Activated T-helper 1 cell treated with anti-CD3 and anti-CD28 coated beads, Interleukin-12 subunit alpha, Interleukin-12 subunit beta, Interleukin-2, Interleukin-4 antibody, amounts not matched to agents 30 ng/mL and 10 ng/mL and 1 ng/mL, durations not matched to agents 14 hours and 24 hours and 36 hours (primary cell): ENCODE measurements at regions of chr3 and their contacts with region 1.

Region 1: DNA sequence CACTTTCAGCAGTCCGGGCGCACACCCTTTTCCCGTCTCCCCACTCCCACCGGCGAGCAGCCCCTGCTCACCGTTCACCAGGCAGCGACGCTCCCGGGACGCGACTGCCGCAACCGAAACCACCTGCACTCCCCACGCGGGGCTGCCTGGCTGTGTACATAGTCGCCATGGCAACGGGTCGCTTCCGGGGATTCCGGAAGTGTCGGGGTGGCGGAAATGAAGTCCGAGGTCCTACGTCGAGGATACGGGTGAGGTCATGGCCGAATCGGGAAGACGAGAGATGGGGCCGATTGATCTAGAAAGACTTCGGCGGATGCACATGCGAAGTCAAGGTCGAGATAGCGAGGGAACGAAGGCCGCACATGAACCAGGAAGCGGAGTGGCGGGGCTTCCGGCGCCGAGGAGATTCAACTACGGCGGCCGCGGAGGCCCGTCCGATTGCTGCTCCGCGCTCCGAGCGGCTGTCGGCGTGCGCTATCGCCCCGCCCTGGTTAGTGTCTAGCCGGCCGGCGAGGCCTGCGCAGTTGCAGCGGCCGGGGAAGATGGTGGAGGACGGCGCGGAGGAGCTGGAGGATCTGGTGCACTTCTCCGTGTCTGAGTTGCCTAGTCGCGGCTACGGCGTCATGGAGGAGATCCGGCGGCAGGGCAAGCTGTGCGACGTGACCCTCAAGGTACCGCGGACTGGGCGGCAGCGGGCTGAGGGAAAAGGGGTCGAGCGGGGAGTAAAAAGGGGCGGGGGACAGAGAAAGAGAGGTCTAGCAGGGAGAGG is at the starts of genes KIF9 and KLHL18:
- DNase-seq: peak; percentile 95
- H3K4me3 Mint-ChIP-seq: peak within 1 kb of the TSS; percentile 98
- H3K27ac Mint-ChIP-seq: peak within 1 kb of the TSS; percentile 100
- H3K4me1 Mint-ChIP-seq: peaks cover 45% of the 10 kb centered on the region
- H3K27me3 Mint-ChIP-seq: no peaks in the 10 kb centered on the region
- total RNA-seq, gene KIF9: 3.3 and 3.4 TPM in 2 replicates
- total RNA-seq, gene KLHL18: 48.3 and 48.7 TPM in 2 replicates

Region 2: GRCh38 chr3:46909535-46910442 is 372.8 kb before region 1 on chr3:
- intact Hi-C with region 1: loop called (anchors 2 kb)
- DNase-seq: peak; percentile 61
- H3K4me3 Mint-ChIP-seq: no peak overlapping the region
- H3K27ac Mint-ChIP-seq: no peak overlapping the region
- H3K4me1 Mint-ChIP-seq: peaks cover 15% of the 10 kb centered on the region
- H3K27me3 Mint-ChIP-seq: no peaks in the 10 kb centered on the region

Region 3: GRCh38 chr3:47035634-47036033 is 247.0 kb before region 1 on chr3:
- intact Hi-C with region 1: loop called (anchors 5 kb)
- DNase-seq: no peak
- H3K4me3 Mint-ChIP-seq: no peak overlapping the region
- H3K27ac Mint-ChIP-seq: no peak overlapping the region
- H3K4me1 Mint-ChIP-seq: peaks cover 21% of the 10 kb centered on the region
- H3K27me3 Mint-ChIP-seq: no peaks in the 10 kb centered on the region

Region 4: GRCh38 chr3:47296562-47297302 is 14.1 kb after region 1 on chr3:
- intact Hi-C with region 1: no loop called
- DNase-seq: no peak
- H3K4me3 Mint-ChIP-seq: no peak overlapping the region
- H3K27ac Mint-ChIP-seq: peak overlapping the region; percentile 70
- H3K4me1 Mint-ChIP-seq: peaks cover 28% of the 10 kb centered on the region
- H3K27me3 Mint-ChIP-seq: no peaks in the 10 kb centered on the region

Region 5: GRCh38 chr3:47324278-47324865 is 41.8 kb after region 1 on chr3:
- intact Hi-C with region 1: loop called (anchors 5 kb)
- DNase-seq: peak; percentile 23
- H3K4me3 Mint-ChIP-seq: no peak overlapping the region
- H3K27ac Mint-ChIP-seq: no peak overlapping the region
- H3K4me1 Mint-ChIP-seq: no peaks in the 10 kb centered on the region
- H3K27me3 Mint-ChIP-seq: no peaks in the 10 kb centered on the region

Region 6: DNA sequence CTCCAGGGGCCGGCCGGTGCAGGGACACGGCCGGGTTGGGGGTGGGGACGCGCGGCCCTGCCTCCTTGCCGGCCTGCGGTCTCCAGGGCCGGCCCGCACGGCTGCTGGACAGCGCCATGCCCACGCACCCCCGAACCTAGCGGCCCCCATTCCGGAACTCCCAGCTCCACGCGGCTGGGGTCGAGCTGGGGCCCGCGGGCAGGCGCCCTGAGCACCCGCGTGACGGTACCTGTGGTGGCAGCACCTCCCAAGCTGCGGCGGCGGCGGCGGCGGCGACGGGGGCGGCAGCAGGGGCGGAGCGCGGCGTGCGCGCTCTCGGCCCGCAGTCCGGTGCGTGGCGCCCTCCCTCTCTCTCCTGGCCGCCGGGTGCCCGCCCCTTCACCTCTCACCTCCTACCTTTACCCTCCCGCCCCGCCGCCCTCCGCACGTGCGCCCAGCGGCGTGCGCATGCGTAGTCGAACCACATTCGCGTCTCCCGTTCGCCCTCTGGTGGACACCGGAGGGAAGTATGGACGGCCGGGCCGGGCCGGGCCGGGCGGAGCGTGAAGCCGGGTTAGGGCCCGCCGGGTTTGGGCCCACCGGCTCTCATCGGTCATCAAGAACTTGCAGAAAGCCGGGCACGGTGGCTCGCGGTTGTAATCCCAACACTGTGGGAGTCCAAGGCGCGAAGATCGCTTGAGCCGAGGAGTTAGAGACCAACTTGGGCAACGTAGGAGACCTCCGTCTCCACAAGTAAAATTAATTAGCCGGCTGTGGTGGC is 193.1 kb after region 1 on chr3 and contains the start of gene SCAP:
- intact Hi-C with region 1: loop called (anchors 1 kb)
- DNase-seq: peak; percentile 95
- H3K4me3 Mint-ChIP-seq: peak within 1 kb of the TSS; percentile 92
- H3K27ac Mint-ChIP-seq: peak within 1 kb of the TSS; percentile 93
- H3K4me1 Mint-ChIP-seq: peaks cover 26% of the 10 kb centered on the region
- H3K27me3 Mint-ChIP-seq: no peaks in the 10 kb centered on the region
- total RNA-seq, gene SCAP: 86.3 and 91.2 TPM in 2 replicates

Region 7: GRCh38 chr3:47802734-47803477 is 520.3 kb after region 1 on chr3 and contains the start of gene DHX30:
- intact Hi-C with region 1: loop called (anchors 5 kb)
- DNase-seq: peak; percentile 82
- H3K4me3 Mint-ChIP-seq: peak within 1 kb of the TSS; percentile 93
- H3K27ac Mint-ChIP-seq: peak within 1 kb of the TSS; percentile 95
- H3K4me1 Mint-ChIP-seq: peaks cover 19% of the 10 kb centered on the region
- H3K27me3 Mint-ChIP-seq: no peaks in the 10 kb centered on the region
- total RNA-seq, gene DHX30: 149 and 154 TPM in 2 replicates